ENCODE measurements at regions of chr2 and their contacts with region 1.

Region 1: DNA sequence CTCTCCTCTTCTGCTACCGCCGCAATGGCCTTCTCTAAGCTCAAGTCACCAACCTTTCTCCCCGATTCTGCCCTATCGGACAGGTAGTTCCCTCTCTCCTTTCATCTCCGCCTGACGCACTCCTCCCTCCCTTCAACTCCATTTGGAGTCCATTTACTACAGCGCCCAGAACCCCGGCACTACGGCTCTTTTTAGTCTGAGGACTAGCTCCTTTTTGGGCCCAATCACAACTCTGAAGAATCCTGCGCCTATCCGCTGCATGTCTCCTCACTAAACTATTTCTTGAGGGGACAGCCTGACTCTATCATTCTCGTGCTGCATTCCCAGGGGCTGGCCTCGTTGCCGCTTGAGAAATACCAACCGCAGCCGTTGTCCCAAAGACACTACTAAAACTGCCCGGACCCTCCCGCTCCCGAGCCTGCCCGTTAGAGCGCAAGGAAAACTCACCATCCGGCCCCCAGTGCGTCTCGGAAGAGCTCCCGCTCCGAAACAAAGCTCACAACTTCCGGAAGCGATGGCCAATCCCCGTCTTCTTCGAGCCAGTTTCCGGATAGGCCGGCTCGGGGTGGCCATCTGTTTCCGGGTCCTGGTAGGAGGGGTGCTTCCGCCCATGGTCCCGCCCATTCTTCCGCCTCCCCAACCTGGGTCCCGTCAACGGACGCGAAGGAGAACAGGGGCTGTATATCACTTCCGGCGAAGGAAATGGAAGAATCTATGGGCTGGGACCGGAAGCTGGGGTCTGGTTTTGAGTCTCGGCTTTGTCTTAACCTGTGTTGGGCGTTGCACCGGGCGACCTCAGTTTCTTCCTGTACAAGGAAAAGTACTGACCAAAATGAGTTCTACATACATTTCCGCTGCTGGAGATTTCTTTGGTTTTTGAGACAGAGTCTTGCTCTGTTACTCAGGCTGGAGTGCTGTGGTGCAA is at the start of gene TPRKB:
- DNase-seq: peak; percentile 94
- H3K4me3 Mint-ChIP-seq: peak within 1 kb of the TSS; percentile 97
- H3K27ac Mint-ChIP-seq: peak within 1 kb of the TSS; percentile 88
- H3K4me1 Mint-ChIP-seq: peaks cover 18% of the 10 kb centered on the region
- H3K27me3 Mint-ChIP-seq: peaks cover 3% of the 10 kb centered on the region
- total RNA-seq, gene TPRKB: 41.5 and 42.7 TPM in 2 replicates

Region 2: DNA sequence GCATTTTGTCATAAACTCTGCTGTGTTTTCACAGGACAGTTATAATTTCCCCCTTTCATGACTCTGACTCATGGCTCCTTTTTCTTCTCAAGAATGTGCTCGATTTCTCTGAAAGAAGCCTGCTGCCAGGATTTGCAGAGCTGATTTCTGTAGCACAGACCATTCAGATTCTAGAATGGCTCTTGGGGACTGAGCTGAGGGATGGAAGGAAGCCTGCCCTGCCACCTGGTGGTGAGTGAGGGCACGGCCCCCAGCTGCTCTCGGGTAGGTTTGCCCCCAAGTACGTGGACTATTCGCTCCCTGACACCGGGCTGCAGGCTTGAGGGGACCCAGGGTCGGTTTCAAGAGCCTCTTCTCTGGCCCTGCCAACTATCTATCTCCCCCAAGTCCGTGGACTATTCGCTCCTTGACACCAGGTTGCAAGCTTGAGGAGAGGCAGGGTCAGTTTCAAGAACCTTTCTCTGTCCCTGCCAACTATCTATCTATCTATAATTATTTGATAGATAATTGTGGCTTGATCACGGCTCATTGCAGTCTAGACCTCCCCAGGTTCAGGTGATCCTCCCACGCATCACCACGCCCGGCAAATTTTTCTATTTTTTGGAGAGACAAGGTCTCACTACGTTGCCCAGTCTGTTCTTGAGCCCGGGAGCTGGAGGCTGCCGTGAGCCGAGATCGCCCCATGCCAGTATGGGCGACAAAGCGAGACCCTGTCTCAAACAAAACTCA is 524.5 kb before region 1 on chr2:
- intact Hi-C with region 1: loop called (anchors 5 kb)
- DNase-seq: peak; percentile 55
- H3K4me3 Mint-ChIP-seq: no peak overlapping the region
- H3K27ac Mint-ChIP-seq: no peak overlapping the region
- H3K4me1 Mint-ChIP-seq: peaks cover 31% of the 10 kb centered on the region
- H3K27me3 Mint-ChIP-seq: peaks cover 3% of the 10 kb centered on the region

Region 3: DNA sequence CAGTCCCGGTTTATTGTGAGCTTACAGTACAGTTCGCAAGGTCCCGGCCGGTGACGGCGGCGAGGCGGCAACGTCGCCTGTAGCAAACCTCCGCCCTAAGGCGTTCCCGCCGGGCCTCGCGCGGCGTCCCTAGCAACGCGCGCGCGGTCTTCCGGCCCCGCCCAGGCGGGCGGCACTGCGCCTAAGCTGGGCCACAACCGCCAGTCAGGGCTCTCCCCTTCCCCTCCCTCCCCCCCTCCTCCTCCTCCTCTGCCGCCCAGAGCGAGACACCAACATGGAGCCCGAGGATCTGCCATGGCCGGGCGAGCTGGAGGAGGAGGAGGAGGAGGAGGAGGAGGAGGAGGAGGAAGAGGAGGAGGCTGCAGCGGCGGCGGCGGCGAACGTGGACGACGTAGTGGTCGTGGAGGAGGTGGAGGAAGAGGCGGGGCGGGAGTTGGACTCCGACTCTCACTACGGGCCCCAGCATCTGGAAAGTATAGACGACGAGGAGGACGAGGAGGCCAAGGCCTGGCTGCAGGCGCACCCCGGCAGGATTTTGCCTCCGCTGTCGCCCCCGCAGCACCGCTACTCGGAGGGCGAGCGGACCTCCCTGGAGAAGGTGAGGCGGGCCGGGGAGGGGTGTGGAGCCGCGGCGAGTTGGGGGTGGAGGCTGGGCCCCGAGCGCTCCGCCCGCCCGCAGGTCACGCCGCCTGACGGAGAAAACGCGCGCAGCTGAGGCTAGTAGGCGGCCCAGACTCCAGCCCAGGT is 351.3 kb before region 1 on chr2 and contains the start of gene ALMS1:
- intact Hi-C with region 1: loop called (anchors 1 kb)
- DNase-seq: peak; percentile 88
- H3K4me3 Mint-ChIP-seq: peak within 1 kb of the TSS; percentile 92
- H3K27ac Mint-ChIP-seq: peak within 1 kb of the TSS; percentile 90
- H3K4me1 Mint-ChIP-seq: peaks cover 37% of the 10 kb centered on the region
- H3K27me3 Mint-ChIP-seq: no peaks in the 10 kb centered on the region
- total RNA-seq, gene ALMS1: 18.2 and 19.4 TPM in 2 replicates

Region 4: GRCh38 chr2:74119912-74120825 is 383.1 kb after region 1 on chr2:
- intact Hi-C with region 1: loop called (anchors 1 kb)
- DNase-seq: peak; percentile 82
- H3K4me3 Mint-ChIP-seq: peak overlapping the region; percentile 82
- H3K27ac Mint-ChIP-seq: peak overlapping the region; percentile 88
- H3K4me1 Mint-ChIP-seq: peaks cover 7% of the 10 kb centered on the region
- H3K27me3 Mint-ChIP-seq: peaks cover 12% of the 10 kb centered on the region

Region 5: DNA sequence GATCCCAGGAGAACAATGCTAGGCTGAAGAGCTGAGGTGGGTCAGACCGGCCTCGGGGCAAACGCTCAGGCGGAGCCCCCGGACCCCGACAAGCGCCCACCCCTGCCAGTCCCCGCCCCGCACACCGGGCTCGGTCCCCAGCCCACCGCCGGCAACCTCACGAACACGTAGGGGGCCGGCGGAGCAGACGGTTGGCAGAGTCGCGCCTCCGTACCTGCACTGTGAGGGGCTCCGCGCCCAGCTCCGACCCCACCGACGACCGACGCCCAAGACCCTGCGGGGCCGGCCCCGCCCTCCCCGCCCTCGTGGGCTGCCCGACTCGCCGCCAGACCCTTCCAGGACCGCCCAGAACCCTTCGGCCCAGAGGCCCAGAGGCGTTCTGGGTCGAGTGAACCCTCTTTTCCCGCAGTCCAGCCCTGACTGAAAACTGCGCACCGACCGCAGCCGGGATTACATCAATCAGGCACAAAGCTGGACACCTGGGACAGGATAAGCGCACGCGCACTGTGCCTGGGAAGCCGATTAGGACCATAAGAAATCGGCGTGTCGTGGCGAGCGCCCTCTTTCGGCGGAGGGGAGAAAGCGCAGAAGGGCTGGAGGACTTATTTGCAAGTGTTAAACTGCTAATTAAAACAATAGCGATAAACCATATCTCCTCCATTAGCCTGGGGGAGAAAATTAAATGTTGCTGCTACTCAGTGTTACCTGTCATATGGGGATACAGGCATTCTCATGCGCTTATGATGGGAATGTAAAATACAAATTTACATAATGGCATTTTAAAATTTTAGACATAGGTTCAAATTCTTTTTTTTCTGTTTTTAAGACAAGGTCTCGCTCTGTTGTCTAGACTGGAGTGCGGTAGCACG is 654.7 kb after region 1 on chr2:
- intact Hi-C with region 1: loop called (anchors 2 kb)
- DNase-seq: peak; percentile 88
- H3K4me3 Mint-ChIP-seq: peak overlapping the region; percentile 43
- H3K27ac Mint-ChIP-seq: peak overlapping the region; percentile 98
- H3K4me1 Mint-ChIP-seq: no peaks in the 10 kb centered on the region
- H3K27me3 Mint-ChIP-seq: peaks cover 10% of the 10 kb centered on the region

Region 6: GRCh38 chr2:74529357-74530238 is 792.5 kb after region 1 on chr2 and contains the starts of genes AUP1 and HTRA2:
- intact Hi-C with region 1: loop called (anchors 1 kb)
- DNase-seq: peak; percentile 90
- H3K4me3 Mint-ChIP-seq: peak within 1 kb of the TSS; percentile 99
- H3K27ac Mint-ChIP-seq: peak within 1 kb of the TSS; percentile 95
- H3K4me1 Mint-ChIP-seq: peaks cover 49% of the 10 kb centered on the region
- H3K27me3 Mint-ChIP-seq: no peaks in the 10 kb centered on the region
- total RNA-seq, gene AUP1: 178 and 187 TPM in 2 replicates
- total RNA-seq, gene HTRA2: 57.0 and 57.3 TPM in 2 replicates

Measured in activated T-helper 1 cell treated with anti-CD3 and anti-CD28 coated beads, Interleukin-12 subunit alpha, Interleukin-12 subunit beta, Interleukin-2, Interleukin-4 antibody, amounts not matched to agents 30 ng/mL and 10 ng/mL and 1 ng/mL, durations not matched to agents 14 hours and 24 hours and 36 hours (primary cell).